ENCODE measurements at regions of chr20 and their contacts with region 1.

Region 1: GRCh38 chr20:54284934-54285704 is 77.2 kb downstream of the PFDN4 start:
- DNase-seq: peak; percentile 68
- ATAC-seq: peak; percentile 87
- H3K4me3 Mint-ChIP-seq: peak overlapping the region; percentile 62
- H3K27ac Mint-ChIP-seq: peak overlapping the region; percentile 94
- H3K4me1 Mint-ChIP-seq: peaks cover 22% of the 10 kb centered on the region
- H3K27me3 Mint-ChIP-seq: peaks cover 11% of the 10 kb centered on the region

Region 2: DNA sequence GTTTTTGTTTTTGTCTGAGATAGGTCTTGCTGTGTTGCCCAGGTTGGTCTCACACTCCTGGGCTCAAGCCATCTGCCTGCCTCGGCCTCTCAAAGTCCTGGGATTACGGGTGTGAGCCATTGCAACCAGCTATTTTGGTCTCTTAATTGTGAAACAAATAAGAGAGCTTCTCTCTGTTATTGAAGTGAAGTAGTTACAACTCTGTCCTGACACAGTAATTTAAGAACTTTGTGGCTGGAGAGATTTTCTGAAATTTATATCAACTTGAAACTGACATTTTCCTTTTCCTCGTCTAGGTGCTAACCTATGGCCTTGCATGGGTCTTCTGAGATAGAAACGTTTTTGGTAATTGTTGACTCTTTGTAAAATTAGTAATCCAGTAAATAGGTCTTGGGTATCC is 68.2 kb after region 1 on chr20:
- CTCF ChIA-PET with region 1: no interaction called
- POLR2A ChIA-PET with region 1: no interaction called
- intact Hi-C with region 1: loop called in 1 of 2 experiments (anchors 1 kb)
- DNase-seq: no peak
- ATAC-seq: peak; percentile 58
- H3K4me3 Mint-ChIP-seq: no peak overlapping the region
- H3K27ac Mint-ChIP-seq: peak overlapping the region; percentile 1
- H3K4me1 Mint-ChIP-seq: peaks cover 15% of the 10 kb centered on the region
- H3K27me3 Mint-ChIP-seq: peaks cover 20% of the 10 kb centered on the region